ENCODE measurements at regions of chr6 and their contacts with region 1.

Region 1: GRCh38 chr6:32622545-32623401 is 14.4 kb upstream of the HLA-DQA1 start:
- DNase-seq: peak; percentile 73
- H3K4me3 ChIP-seq: no peak overlapping the region
- H3K27ac ChIP-seq: no peak overlapping the region
- H3K4me1 ChIP-seq: no peaks in the 10 kb centered on the region
- H3K27me3 ChIP-seq: no peaks in the 10 kb centered on the region
- CTCF ChIP-seq: peak; percentile 64

Region 2: DNA sequence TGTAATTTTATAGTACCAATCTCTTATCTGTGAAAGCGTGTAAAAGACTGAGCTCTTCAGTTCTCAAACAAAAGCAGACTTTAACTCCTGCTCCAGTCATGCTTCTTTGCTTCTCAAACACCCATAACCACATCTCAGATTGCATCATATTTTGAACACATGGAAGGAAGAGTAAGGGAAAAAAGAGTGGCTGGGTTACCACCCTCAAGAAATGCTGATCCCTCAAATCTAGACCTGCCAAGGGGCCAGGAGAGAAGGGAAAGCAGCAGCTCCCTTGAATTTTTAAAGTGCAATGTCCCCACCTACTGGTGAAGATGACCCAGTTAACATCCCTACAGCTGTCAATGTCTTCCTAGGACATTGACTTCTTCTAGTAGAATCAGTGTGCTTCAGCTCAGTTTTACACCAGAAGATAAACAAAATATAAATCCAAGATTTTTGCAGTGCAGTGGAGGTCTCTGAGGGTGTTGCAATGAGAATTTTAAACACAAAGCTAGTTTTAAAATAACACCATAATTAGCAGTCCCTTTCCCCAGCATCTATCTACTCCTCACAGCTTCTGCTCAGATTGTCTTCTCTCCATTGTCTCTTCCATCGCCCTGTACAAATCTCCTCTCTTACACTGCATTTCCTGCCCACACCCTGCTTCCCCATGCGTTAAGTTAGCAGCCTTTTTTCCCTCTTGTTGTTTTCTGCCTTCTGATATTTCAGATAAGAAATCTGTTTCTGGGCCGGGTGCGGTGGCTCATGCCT is 163.2 kb after region 1 on chr6:
- CTCF ChIA-PET with region 1: interaction called, 3 read pairs
- POLR2A ChIA-PET with region 1: no interaction called
- intact Hi-C with region 1: loop called (anchors 5 kb)
- DNase-seq: peak; percentile 77
- H3K4me3 ChIP-seq: no peak overlapping the region
- H3K27ac ChIP-seq: no peak overlapping the region
- H3K4me1 ChIP-seq: no peaks in the 10 kb centered on the region
- H3K27me3 ChIP-seq: peaks cover 48% of the 10 kb centered on the region
- CTCF ChIP-seq: peak; percentile 76

Region 3: GRCh38 chr6:32868257-32868788 is 245.6 kb after region 1 on chr6:
- CTCF ChIA-PET with region 1: interaction called, 12 read pairs
- POLR2A ChIA-PET with region 1: no interaction called
- intact Hi-C with region 1: no loop called
- DNase-seq: peak; percentile 84
- H3K4me3 ChIP-seq: no peak overlapping the region
- H3K27ac ChIP-seq: no peak overlapping the region
- H3K4me1 ChIP-seq: no peaks in the 10 kb centered on the region
- H3K27me3 ChIP-seq: peaks cover 50% of the 10 kb centered on the region
- CTCF ChIP-seq: peak; percentile 91

Region 4: DNA sequence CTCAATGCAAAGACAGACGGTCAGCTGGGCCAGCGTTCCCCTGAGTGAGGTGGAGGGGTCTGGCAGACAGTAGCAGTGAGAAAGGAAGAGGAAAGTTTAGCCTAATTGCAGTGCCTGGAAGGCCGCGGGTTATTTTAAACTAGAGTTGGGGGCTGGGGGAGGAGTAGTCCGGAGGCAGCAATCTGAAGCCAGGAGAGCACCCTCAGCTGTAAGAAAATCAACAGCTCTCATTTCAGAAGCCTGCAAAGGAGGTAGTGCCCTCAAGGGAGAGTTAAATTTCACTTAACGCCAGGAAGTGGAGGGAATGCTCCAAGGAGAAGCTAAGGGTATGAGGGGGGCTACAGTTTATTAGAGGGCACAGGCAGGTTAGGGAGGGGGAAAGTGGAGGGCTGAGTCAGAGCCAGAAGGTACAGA is 612.5 kb after region 1 on chr6:
- CTCF ChIA-PET with region 1: interaction called, 10 read pairs
- POLR2A ChIA-PET with region 1: no interaction called
- intact Hi-C with region 1: no loop called
- DNase-seq: no peak
- H3K4me3 ChIP-seq: no peak overlapping the region
- H3K27ac ChIP-seq: no peak overlapping the region
- H3K4me1 ChIP-seq: no peaks in the 10 kb centered on the region
- H3K27me3 ChIP-seq: no peaks in the 10 kb centered on the region
- CTCF ChIP-seq: no peak

Measured in A673 (cell line).